Lower leg skin (tissue), 4 donors: ENCODE measurements at regions of chr17 and their contacts with region 1.

Region 1: GRCh38 chr17:40443583-40444327 is 505 bp downstream of the IGFBP4 start:
- DNase-seq: peak; percentile 53 to 97
- H3K4me3 ChIP-seq: peak overlapping the region; percentile 31
- CTCF ChIP-seq: no peak
- POLR2A ChIP-seq: no peak

Region 2: DNA sequence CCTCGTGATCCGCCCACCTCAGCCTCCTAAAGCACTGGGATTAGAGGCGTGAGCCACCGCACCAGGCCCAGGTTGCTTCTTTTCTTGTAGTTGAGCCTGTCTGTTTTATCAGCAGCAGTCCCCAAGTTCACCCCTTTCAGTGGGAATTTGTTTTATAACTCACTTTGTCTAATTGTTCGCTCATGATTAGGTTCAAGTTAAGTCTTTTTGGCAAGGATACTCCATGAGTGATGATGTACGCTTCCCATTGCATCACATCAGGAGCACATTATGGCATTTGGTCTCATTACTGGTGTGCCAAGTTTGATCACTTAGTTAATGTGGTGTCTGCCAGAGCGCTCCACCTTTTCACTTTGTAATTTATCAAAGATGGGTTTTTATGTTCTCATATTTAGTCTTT is 64.8 kb before region 1 on chr17:
- intact Hi-C with region 1: no loop called
- DNase-seq: no peak
- H3K4me3 ChIP-seq: no peak overlapping the region
- CTCF ChIP-seq: no peak
- POLR2A ChIP-seq: no peak

Region 3: DNA sequence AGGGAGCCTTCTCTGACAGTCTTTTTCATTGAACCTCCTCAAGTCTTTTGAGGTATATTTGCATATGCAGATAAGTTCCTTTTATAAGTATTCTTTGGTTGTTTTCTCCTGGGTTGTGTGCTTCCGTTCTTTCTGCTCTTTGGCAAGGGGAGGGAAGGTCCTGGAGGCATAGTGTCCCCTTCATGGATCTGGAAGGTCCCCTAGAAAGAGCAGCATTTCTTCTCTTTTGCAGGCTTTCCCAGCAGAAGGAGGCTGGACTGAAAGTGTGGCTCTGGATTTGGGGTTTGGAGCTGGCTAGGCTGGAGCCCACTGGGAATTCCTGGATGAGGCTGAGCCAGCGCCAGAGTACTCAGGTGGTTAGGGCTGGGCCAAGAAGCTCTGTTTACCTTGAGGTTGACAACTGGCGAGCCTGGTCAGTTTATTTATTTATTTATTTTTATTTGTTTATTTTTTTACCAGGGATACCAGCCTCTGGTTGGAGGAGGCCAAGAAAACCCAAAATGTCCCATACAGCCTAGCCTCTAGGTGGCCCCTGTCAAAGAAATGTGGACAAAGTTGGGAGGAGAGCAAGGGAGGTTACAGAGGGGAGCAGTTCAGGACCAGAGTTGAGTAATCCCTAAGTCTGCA is 20.7 kb before region 1 on chr17:
- intact Hi-C with region 1: no loop called
- DNase-seq: peak in 1 of 2 donors; percentile 74
- H3K4me3 ChIP-seq: no peak overlapping the region
- CTCF ChIP-seq: no peak
- POLR2A ChIP-seq: no peak

Region 4: GRCh38 chr17:40536295-40537171 is 92.8 kb after region 1 on chr17:
- intact Hi-C with region 1: loop called (anchors 10 kb)
- DNase-seq: peak in 1 of 2 donors; percentile 94
- H3K4me3 ChIP-seq: no peak overlapping the region
- CTCF ChIP-seq: no peak
- POLR2A ChIP-seq: no peak